ENCODE measurements at regions of chr16 and their contacts with region 1.

Region 1: DNA sequence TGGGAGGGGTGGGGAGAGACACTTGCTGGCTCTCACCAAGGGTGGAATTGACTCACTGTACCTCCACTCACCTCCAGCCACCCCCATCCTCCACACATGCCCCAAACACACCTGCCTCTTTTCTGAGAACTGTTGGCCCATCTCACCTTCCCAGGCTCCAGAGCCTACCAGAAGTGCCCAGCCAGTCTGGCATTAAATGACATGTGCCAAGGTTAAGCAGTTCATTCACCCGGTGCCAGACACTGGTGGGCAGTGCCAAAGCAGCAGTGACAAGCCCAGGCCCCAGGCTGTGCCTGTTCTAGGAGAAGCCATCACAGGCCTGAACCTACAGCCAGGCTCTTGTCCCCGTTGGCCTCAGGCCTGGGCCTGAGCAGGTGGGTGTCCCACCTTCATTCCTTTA is 11.2 kb downstream of the MVP start:
- DNase-seq: no peak

Region 2: DNA sequence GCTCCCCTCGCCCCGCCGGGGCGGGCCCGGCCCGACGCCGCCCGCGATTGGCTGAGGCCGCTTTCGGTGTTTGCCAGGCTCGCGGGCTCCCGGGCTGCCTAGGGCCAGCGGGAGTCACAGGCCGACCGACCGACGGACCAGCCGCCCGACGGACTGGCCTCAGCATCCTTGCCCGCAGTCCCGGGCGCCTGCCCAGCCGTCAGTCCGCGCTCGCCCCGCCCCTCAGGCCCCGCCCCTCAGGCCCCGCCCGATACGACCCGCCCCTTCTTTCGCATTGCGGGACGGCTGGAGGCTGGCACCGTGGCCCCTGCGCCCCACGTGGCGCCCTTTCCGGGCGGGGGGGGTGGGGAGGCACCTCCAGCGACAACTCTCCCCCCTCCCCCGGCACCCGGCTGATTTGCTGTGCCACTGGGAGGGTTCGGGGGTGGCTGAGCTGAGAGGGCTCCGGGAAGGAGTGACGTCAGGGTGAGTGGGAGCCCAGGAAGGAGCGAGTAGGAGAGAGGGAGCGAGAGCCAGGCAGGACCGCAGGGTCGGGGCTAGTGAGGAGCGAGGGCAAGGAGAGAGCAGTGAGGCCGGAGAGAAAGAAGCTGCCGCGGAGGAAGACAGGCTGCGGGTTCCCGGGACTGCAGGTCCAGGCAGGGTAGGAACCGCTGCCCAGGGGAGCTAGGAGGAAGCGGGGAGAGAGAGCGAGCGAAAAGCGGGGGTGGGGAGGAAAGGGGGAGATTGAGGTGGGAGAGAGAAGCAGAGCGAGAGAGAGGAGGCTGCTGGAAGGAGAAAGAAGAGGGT is 68.8 kb after region 1 on chr16 and contains the start of gene ASPHD1:
- intact Hi-C with region 1: loop called (anchors 10 kb)
- DNase-seq: peak; percentile 79
- total RNA-seq, gene ASPHD1: 0.38 TPM

Region 3: DNA sequence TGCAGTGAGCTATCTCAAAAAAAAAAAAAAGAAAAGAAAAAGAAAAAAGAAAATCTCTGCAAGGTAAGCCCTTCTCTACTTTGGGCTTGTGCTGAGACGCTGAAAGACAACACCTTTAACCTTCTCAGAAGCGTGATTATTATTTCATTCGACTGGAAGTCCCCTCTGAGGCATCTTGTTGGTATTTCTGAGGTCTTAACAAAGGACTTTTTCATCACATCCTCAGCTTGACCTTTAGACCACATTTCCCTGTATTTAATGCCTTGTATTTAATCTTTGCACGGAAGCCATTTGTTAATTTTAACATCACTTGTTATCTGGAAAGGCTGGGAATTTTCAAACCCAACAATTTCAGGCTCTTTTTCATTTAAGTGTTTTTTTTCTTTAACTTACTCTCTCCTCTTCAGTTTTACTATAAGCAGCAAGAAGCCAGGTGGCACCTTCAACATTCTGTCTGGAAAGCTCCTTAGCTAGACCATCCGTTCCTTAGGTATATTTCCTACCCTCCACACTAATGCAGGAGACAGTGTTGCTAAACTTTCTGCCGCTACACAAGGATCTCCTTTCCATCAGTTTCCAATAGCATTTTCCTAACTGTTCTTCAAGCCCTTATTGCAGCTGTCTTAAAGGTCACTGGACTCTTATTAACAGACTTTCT is 84.2 kb after region 1 on chr16:
- intact Hi-C with region 1: no loop called
- DNase-seq: no peak

Region 4: GRCh38 chr16:30829130-30830071 is 997.9 kb after region 1 on chr16:
- intact Hi-C with region 1: loop called (anchors 10 kb)
- DNase-seq: no peak

Measured in cardiac septum (tissue), 1 donor.